ENCODE measurements at regions of chr14 and their contacts with region 1.

Region 1: GRCh38 chr14:60628892-60629291 is 20.4 kb downstream of the SIX1 start:
- DNase-seq: no peak
- H3K4me3 ChIP-seq: no peak overlapping the region
- H3K27ac ChIP-seq: no peak overlapping the region
- H3K4me1 ChIP-seq: peaks cover 0 to 4% (median 0%) of the 10 kb centered on the region in 3 donors
- H3K27me3 ChIP-seq: no peaks in the 10 kb centered on the region
- CTCF ChIP-seq: no peak

Region 2: DNA sequence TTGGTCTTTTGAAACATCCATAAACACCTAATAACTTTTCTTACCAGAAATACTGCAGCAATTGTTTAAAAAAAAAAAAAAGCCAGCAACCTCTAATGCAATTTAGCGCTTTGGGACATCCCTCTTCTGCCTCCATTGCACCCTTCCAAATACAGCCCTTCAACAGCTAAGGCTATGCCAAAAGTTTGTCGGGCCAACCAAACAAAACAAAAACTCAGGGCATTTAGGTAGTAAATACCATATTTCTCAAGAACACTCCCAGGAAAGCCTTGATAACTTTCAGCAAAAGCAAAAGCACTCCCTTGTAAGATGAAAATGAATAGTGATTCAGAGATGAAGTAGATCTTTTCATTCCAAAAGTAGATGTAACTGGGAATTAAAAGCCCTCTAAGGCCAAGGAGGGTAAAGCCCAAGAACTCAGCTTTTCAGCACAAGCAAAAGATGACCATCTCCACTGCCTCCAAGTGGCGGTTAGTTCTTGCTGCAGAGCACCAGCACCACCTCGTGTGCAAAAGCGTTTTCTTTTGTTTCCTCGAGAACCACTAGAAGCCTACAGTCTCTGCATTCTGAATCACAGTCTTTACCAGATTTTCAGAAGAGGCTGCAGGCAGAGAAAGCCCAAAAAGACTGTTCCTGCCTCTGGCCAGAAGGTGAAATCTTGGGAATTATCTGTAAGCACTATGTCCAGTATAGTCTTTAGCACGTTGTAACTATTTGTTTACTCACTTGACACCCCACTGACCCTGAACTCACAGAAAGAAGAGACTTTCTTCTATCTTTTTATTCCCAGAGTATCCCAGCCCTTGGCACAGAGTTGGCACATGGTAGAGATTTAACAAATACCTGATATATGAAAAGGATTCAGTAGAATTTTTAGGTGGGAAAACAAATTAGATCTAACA is 66.8 kb before region 1 on chr14:
- intact Hi-C with region 1: no loop called
- DNase-seq: peak in 4 of 5 donors; percentile 65 to 87 (median 81)
- H3K4me3 ChIP-seq: no peak overlapping the region
- H3K27ac ChIP-seq: no peak overlapping the region
- H3K4me1 ChIP-seq: no peaks in the 10 kb centered on the region
- H3K27me3 ChIP-seq: no peaks in the 10 kb centered on the region
- CTCF ChIP-seq: peak; percentile 62

Region 3: GRCh38 chr14:60734465-60735242 is 105.8 kb after region 1 on chr14 and contains the start of gene MNAT1:
- intact Hi-C with region 1: no loop called
- DNase-seq: peak; percentile 87 to 92 (median 89)
- H3K4me3 ChIP-seq: peak within 1 kb of the TSS; percentile 93 to 100 (median 95)
- H3K27ac ChIP-seq: peak within 1 kb of the TSS; percentile 23 to 65
- H3K4me1 ChIP-seq: peaks cover 0 to 4% (median 0%) of the 10 kb centered on the region in 3 donors
- H3K27me3 ChIP-seq: no peaks in the 10 kb centered on the region
- CTCF ChIP-seq: peak; percentile 2
- total RNA-seq, gene MNAT1: 29.6 TPM

Region 4: GRCh38 chr14:61252369-61253063 is 623.6 kb after region 1 on chr14:
- intact Hi-C with region 1: loop called (anchors 5 kb)
- DNase-seq: peak; percentile 70 to 96 (median 87)
- H3K4me3 ChIP-seq: no peak overlapping the region
- H3K27ac ChIP-seq: no peak overlapping the region
- H3K4me1 ChIP-seq: no peaks in the 10 kb centered on the region
- H3K27me3 ChIP-seq: no peaks in the 10 kb centered on the region
- CTCF ChIP-seq: peak; percentile 82

Measured in kidney (tissue), 22 donors.